ENCODE measurements at regions of chr16 and their contacts with region 1.

Region 1: GRCh38 chr16:58345574-58346354 is 46.5 kb upstream of the GINS3 start:
- DNase-seq: no peak
- ATAC-seq: no peak
- H3K4me3 ChIP-seq: no peak overlapping the region
- H3K27ac ChIP-seq: peak overlapping the region in 3 of 12 donors; percentile 15 to 65 (median 62)
- H3K4me1 ChIP-seq: peaks cover 0 to 36% (median 19%) of the 10 kb centered on the region in 12 donors
- H3K27me3 ChIP-seq: peaks cover 0 to 18% (median 0%) of the 10 kb centered on the region in 9 donors
- CTCF ChIP-seq: peak in 11 of 12 donors; percentile 13 to 58 (median 34)
- POLR2A ChIP-seq: no peak

Region 2: GRCh38 chr16:58392215-58393137 is 46.7 kb after region 1 on chr16 and contains the start of gene GINS3:
- intact Hi-C with region 1: loop called in 7 of 10 experiments (anchors 2 to 5 kb)
- DNase-seq: peak; percentile 92 to 94 (median 93)
- ATAC-seq: peak; percentile 94 to 99 (median 98)
- H3K4me3 ChIP-seq: peak within 1 kb of the TSS; percentile 66 to 96 (median 88)
- H3K27ac ChIP-seq: peak within 1 kb of the TSS; percentile 59 to 95 (median 87)
- H3K4me1 ChIP-seq: peaks cover 0 to 16% (median 9%) of the 10 kb centered on the region in 12 donors
- H3K27me3 ChIP-seq: no peaks in the 10 kb centered on the region
- CTCF ChIP-seq: no peak
- POLR2A ChIP-seq: peak in 1 of 2 donors; percentile 19
- total RNA-seq, gene GINS3: 3.9 to 8.7 (median 7.1) TPM

Region 3: DNA sequence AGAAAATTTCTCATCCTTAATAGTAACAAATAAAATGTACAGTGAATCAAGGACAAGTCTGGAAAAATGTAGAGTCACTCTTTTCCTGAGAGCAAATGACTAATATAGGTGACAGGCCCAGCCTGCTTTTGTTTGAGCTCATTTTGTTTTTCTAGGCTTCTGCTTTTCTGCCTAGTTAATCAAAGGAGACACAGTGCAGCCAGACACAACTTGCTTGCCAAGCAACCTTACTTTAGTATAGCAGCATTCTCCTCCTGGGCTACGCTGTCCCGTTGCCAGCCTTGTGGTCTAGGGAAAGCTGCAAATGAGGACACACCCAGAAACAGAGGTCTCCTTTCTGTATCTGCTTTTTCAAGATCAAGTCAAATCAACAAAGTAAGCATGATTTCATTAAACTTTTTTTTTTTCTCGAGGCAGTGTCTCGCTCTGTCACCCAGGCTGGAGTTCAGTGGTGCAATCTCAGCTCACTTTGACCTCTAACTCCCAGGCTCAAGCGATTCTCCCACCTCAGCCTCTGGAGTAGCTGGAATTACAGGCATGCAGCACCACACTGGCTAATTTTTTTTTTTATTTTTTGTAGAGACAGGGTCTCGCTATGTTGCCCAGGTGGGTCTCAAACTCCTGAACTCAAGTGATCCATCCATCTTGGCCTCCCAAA is 63.7 kb after region 1 on chr16:
- intact Hi-C with region 1: loop called in 3 of 10 experiments (anchors 5 kb)
- DNase-seq: peak in 4 of 5 donors; percentile 46 to 75 (median 63)
- ATAC-seq: peak; percentile 48 to 81 (median 76)
- H3K4me3 ChIP-seq: no peak overlapping the region
- H3K27ac ChIP-seq: peak overlapping the region; percentile 31 to 98 (median 82)
- H3K4me1 ChIP-seq: peaks cover 0 to 49% (median 8%) of the 10 kb centered on the region in 12 donors
- H3K27me3 ChIP-seq: no peaks in the 10 kb centered on the region
- CTCF ChIP-seq: no peak
- POLR2A ChIP-seq: no peak

Region 4: GRCh38 chr16:58629572-58630104 is 283.9 kb after region 1 on chr16 and contains the start of gene CNOT1:
- intact Hi-C with region 1: no loop called
- DNase-seq: peak; percentile 98 to 99 (median 98)
- ATAC-seq: peak; percentile 93 to 96 (median 96)
- H3K4me3 ChIP-seq: peak within 1 kb of the TSS; percentile 66 to 99 (median 88)
- H3K27ac ChIP-seq: peak within 1 kb of the TSS; percentile 95 to 100 (median 98)
- H3K4me1 ChIP-seq: peaks cover 0 to 38% (median 23%) of the 10 kb centered on the region in 12 donors
- H3K27me3 ChIP-seq: no peaks in the 10 kb centered on the region
- CTCF ChIP-seq: no peak
- POLR2A ChIP-seq: peak in 1 of 2 donors; percentile 81
- total RNA-seq, gene CNOT1: 66.6 to 110 (median 82.5) TPM

Measured in heart left ventricle (tissue), 16 donors.